Activated T-helper 2 cell treated with anti-CD3 and anti-CD28 coated beads, Interferon-gamma antibody, Interleukin-2, Interleukin-4, amounts not matched to agents 10 μg/mL and 5 μg/mL and 100 μg/mL, durations not matched to agents 14 hours and 24 hours and 36 hours (primary cell): ENCODE measurements at regions of chr10 and their contacts with region 1.

Region 1: GRCh38 chr10:14191871-14192270 is 138.9 kb downstream of the FRMD4A start:
- DNase-seq: no peak
- H3K4me3 Mint-ChIP-seq: no peak overlapping the region
- H3K27ac Mint-ChIP-seq: no peak overlapping the region
- H3K4me1 Mint-ChIP-seq: peaks cover under 1% of the 10 kb centered on the region
- H3K27me3 Mint-ChIP-seq: peaks cover 45% of the 10 kb centered on the region

Region 2: GRCh38 chr10:13816195-13816926 is 375.5 kb before region 1 on chr10:
- intact Hi-C with region 1: no loop called
- DNase-seq: no peak
- H3K4me3 Mint-ChIP-seq: no peak overlapping the region
- H3K27ac Mint-ChIP-seq: no peak overlapping the region
- H3K4me1 Mint-ChIP-seq: peaks cover 3% of the 10 kb centered on the region
- H3K27me3 Mint-ChIP-seq: peaks cover 5% of the 10 kb centered on the region

Region 3: DNA sequence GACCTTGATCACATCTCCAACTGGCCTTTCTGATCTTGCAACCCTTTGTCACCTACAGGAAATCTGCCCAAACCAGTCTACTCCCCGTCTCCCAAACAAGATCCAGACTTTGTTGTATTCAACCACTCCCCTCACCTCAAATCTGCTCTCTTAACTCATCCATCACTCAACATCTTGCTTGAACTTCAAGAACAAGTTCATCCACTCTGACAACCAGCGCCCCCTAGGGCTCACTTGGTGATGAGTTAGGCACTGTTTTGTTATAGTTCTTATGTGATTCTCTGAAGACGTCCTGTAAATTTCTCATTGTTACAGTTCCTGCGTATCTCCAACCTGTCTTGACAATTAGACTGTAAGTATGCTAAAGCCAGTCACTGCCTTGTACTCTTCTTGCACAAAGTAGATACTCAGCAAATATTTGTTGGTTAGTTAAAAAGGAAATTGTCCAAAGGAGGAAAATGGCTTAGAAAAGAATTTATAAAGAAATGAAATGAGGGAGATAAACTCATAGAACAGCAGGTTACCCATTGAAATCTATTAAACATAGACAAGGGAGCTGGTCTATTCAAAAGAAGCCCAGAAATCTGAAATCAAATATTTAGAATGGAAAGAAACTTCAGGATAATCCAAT is 133.6 kb after region 1 on chr10:
- intact Hi-C with region 1: loop called (anchors 10 kb)
- DNase-seq: peak; percentile 36
- H3K4me3 Mint-ChIP-seq: no peak overlapping the region
- H3K27ac Mint-ChIP-seq: no peak overlapping the region
- H3K4me1 Mint-ChIP-seq: no peaks in the 10 kb centered on the region
- H3K27me3 Mint-ChIP-seq: peaks cover 24% of the 10 kb centered on the region